GM10248 (cell line): ENCODE measurements at regions of chr22 and their contacts with region 1.

Region 1: GRCh38 chr22:37933711-37934376 is 19.6 kb downstream of the C22orf23 start:
- DNase-seq: peak; percentile 92
- CTCF ChIP-seq: peak; percentile 98

Region 2: GRCh38 chr22:37896181-37896592 is 37.7 kb before region 1 on chr22:
- CTCF ChIA-PET with region 1: interaction called, 10 read pairs
- POLR2A ChIA-PET with region 1: no interaction called
- DNase-seq: peak; percentile 82
- CTCF ChIP-seq: no peak

Region 3: GRCh38 chr22:37910890-37911743 is 22.7 kb before region 1 on chr22:
- CTCF ChIA-PET with region 1: interaction called, 13 read pairs
- POLR2A ChIA-PET with region 1: no interaction called
- DNase-seq: no peak
- CTCF ChIP-seq: no peak

Region 4: DNA sequence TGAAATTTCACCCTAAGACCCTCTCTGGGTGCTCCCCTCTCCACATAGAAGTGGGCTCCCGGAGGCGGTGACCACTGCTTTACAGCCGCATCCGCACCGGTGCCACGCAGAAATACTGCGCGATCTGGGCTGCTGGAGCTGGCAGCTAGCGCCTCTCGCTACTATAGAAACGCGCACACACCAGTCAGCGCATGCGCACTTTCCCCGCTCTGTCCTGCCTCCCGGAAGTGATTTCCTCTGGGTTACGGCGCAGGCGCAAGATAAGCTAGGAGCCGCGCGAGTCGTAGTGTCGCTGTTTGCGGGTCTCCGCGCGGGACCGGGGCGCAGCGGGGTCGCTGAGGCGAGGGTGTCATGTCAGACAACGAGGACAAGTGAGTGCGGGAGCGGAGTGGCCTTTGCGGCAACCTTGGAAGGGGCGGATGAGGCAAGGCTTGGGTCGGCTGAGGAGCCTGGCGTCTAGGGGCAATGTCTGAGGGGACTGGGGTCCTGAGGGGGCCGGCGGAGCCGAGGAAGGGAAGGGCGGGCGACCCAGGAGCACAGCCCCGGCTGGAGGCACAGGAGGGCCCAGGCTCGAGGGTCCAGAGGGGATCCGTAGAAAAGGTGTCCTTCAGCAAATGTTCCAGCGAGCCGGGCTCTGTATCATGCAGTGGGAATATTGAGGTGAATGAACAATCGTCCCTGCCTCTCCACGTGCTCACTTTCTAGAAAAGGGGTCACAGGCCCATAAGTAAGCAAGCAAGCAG is 19.8 kb after region 1 on chr22 and contains the starts of genes C22orf23 and POLR2F:
- CTCF ChIA-PET with region 1: interaction called, 14 read pairs
- POLR2A ChIA-PET with region 1: no interaction called
- DNase-seq: peak; percentile 100
- CTCF ChIP-seq: no peak

Region 5: DNA sequence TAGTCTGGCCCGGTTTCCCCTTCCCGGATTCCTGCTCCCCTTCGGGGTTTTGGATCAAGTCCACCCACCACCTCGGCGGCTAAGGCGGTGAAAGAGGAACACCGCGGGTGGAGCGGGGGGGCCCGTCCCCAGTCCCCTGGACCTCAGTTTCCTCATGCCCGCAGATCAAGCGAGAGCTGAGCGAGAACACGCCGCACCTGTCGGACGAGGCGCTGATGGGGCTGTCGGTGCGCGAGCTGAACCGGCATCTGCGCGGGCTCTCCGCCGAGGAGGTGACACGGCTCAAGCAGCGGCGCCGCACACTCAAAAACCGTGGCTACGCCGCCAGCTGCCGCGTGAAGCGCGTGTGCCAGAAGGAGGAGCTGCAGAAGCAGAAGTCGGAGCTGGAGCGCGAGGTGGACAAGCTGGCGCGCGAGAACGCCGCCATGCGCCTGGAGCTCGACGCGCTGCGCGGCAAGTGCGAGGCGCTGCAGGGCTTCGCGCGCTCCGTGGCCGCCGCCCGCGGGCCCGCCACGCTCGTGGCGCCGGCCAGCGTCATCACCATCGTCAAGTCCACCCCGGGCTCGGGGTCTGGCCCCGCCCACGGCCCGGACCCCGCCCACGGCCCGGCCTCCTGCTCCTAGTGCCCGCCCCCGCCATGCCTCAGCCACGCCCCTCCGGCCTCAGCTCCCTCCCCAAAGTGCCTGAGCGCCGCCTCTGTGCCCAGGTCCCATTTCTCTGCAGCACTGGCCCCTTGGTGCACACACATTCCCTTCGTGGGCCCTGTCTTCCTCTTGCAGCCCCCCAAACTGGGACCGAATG is 280.6 kb after region 1 on chr22:
- CTCF ChIA-PET with region 1: no interaction called
- POLR2A ChIA-PET with region 1: no interaction called
- DNase-seq: peak; percentile 79
- CTCF ChIP-seq: peak; percentile 14